ENCODE measurements at regions of chr16 and their contacts with region 1.

Region 1: DNA sequence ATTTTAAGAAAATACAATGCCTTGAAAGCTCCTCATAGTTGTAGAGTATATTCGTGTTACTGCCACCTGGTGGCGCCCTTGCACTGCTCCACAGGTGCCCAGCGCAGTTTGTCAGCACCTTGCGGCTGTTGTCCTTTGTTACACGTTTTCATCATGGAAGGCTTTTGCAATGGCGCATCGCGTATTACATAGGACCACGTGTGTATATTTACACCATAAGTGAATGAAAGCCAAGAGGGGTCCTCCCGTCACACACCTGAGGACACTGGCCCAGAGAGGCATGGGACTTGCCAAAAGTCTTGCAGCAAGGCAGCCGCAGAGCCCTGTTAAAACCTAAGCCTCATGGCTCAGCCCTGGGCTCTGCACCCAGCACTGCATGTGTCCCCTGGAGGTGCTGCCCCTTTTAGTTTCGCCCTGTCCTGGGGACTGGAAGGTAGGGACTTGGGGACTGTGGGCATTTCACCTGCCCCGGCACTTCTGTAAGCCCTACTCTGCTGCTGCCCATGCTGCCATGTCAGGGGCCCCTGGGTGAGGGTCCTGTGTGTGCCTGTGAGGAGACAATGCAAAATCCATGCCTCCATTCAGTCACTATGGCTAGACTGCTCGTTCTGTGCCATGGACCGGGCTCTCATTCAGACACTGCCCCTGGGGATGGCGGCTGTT is 24.3 kb downstream of the POLR3E start:
- DNase-seq: peak; percentile 70 to 78
- ATAC-seq: peak; percentile 69 to 83 (median 78)
- H3K4me3 ChIP-seq: no peak overlapping the region
- H3K27ac ChIP-seq: peak overlapping the region; percentile 11
- H3K4me1 ChIP-seq: peaks cover 3% of the 10 kb centered on the region
- H3K27me3 ChIP-seq: no peaks in the 10 kb centered on the region
- CTCF ChIP-seq: peak; percentile 90

Region 2: GRCh38 chr16:21184834-21185233 is 1136.6 kb before region 1 on chr16:
- intact Hi-C with region 1: loop called in 1 of 2 experiments (anchors 5 kb)
- DNase-seq: no peak
- ATAC-seq: no peak
- H3K4me3 ChIP-seq: no peak overlapping the region
- H3K27ac ChIP-seq: no peak overlapping the region
- H3K4me1 ChIP-seq: no peaks in the 10 kb centered on the region
- H3K27me3 ChIP-seq: no peaks in the 10 kb centered on the region
- CTCF ChIP-seq: no peak

Region 3: GRCh38 chr16:22417019-22417418 is 95.5 kb after region 1 on chr16:
- intact Hi-C with region 1: loop called (anchors 5 to 10 kb)
- DNase-seq: no peak
- ATAC-seq: no peak
- H3K4me3 ChIP-seq: no peak overlapping the region
- H3K27ac ChIP-seq: no peak overlapping the region
- H3K4me1 ChIP-seq: no peaks in the 10 kb centered on the region
- H3K27me3 ChIP-seq: no peaks in the 10 kb centered on the region
- CTCF ChIP-seq: no peak

Region 4: GRCh38 chr16:22424161-22424937 is 102.9 kb after region 1 on chr16:
- intact Hi-C with region 1: loop called (anchors 5 to 10 kb)
- DNase-seq: peak; percentile 74 to 85
- ATAC-seq: peak; percentile 73 to 93 (median 86)
- H3K4me3 ChIP-seq: peak overlapping the region; percentile 60
- H3K27ac ChIP-seq: peak overlapping the region; percentile 76
- H3K4me1 ChIP-seq: peaks cover 17% of the 10 kb centered on the region
- H3K27me3 ChIP-seq: no peaks in the 10 kb centered on the region
- CTCF ChIP-seq: no peak

Measured in psoas muscle (tissue), 8 donors.